Activated B cell treated with CpG ODN at 0.5 μM for 24 hours (primary cell): ENCODE measurements at regions of chr22 and their contacts with region 1.

Region 1: GRCh38 chr22:30386960-30387827 is at the start of gene RNF215:
- DNase-seq: peak; percentile 94
- ATAC-seq: peak; percentile 85
- H3K4me3 Mint-ChIP-seq: peak within 1 kb of the TSS; percentile 84
- H3K27ac Mint-ChIP-seq: peak within 1 kb of the TSS; percentile 41
- H3K4me1 Mint-ChIP-seq: peaks cover 25% of the 10 kb centered on the region
- H3K27me3 Mint-ChIP-seq: peaks cover 3% of the 10 kb centered on the region
- CTCF ChIP-seq: no peak
- total RNA-seq, gene RNF215: 8.6 and 8.8 TPM in 2 replicates

Region 2: DNA sequence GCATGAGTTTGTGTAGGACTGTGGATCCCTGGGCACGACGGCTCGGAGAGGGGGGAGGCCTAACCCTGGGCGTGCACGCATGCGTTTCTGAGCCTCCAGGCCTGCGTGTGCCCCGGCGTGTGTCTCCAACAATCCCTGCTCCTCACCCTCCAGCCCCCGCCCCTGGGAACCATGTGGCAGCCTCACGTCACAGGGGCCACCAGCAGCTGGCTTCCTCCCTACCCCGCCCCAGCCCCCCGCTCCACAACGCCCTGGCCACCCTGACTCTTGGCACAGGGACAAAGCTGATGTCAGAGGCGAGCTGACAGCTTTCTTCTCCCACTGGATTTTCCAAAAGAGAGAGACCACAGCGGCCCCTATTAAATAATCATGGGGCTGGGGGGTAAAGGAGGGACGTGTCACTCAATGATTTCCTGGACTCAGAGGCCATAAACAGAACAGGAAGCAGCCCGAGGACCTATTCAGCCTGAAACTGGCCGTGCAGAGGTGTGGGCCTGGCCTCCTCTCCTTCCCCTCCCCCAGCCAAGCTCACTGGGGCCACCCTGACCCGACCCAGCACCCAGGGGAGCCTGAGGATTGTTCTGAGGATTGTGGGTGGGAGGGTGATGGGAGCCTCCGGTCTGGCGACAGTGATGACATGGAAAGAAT is 133.9 kb before region 1 on chr22:
- CTCF ChIA-PET with region 1: interaction called, 3 read pairs
- POLR2A ChIA-PET with region 1: no interaction called
- intact Hi-C with region 1: loop called (anchors 1 kb)
- DNase-seq: no peak
- ATAC-seq: no peak
- H3K4me3 Mint-ChIP-seq: no peak overlapping the region
- H3K27ac Mint-ChIP-seq: no peak overlapping the region
- H3K4me1 Mint-ChIP-seq: peaks cover 5% of the 10 kb centered on the region
- H3K27me3 Mint-ChIP-seq: peaks cover 17% of the 10 kb centered on the region
- CTCF ChIP-seq: no peak

Region 3: GRCh38 chr22:30326706-30327362 is 60.4 kb before region 1 on chr22 and contains the start of gene TBC1D10A:
- CTCF ChIA-PET with region 1: interaction called, 5 read pairs
- POLR2A ChIA-PET with region 1: interaction called, 6 read pairs
- intact Hi-C with region 1: loop called (anchors 1 kb)
- DNase-seq: peak; percentile 83
- ATAC-seq: peak; percentile 94
- H3K4me3 Mint-ChIP-seq: peak within 1 kb of the TSS; percentile 86
- H3K27ac Mint-ChIP-seq: peak within 1 kb of the TSS; percentile 82
- H3K4me1 Mint-ChIP-seq: peaks cover 45% of the 10 kb centered on the region
- H3K27me3 Mint-ChIP-seq: no peaks in the 10 kb centered on the region
- CTCF ChIP-seq: no peak
- total RNA-seq, gene TBC1D10A: 20.1 and 20.4 TPM in 2 replicates

Region 4: GRCh38 chr22:30336752-30337460 is 50.3 kb before region 1 on chr22:
- CTCF ChIA-PET with region 1: no interaction called
- POLR2A ChIA-PET with region 1: no interaction called
- intact Hi-C with region 1: no loop called
- DNase-seq: no peak
- ATAC-seq: no peak
- H3K4me3 Mint-ChIP-seq: no peak overlapping the region
- H3K27ac Mint-ChIP-seq: no peak overlapping the region
- H3K4me1 Mint-ChIP-seq: no peaks in the 10 kb centered on the region
- H3K27me3 Mint-ChIP-seq: no peaks in the 10 kb centered on the region
- CTCF ChIP-seq: no peak

Region 5: GRCh38 chr22:30485362-30485988 is 98.3 kb after region 1 on chr22:
- CTCF ChIA-PET with region 1: interaction called, 26 read pairs
- POLR2A ChIA-PET with region 1: interaction called, 7 read pairs
- intact Hi-C with region 1: loop called (anchors 1 kb)
- DNase-seq: peak; percentile 66
- ATAC-seq: peak; percentile 93
- H3K4me3 Mint-ChIP-seq: no peak overlapping the region
- H3K27ac Mint-ChIP-seq: no peak overlapping the region
- H3K4me1 Mint-ChIP-seq: no peaks in the 10 kb centered on the region
- H3K27me3 Mint-ChIP-seq: peaks cover 9% of the 10 kb centered on the region
- CTCF ChIP-seq: peak; percentile 31

Region 6: DNA sequence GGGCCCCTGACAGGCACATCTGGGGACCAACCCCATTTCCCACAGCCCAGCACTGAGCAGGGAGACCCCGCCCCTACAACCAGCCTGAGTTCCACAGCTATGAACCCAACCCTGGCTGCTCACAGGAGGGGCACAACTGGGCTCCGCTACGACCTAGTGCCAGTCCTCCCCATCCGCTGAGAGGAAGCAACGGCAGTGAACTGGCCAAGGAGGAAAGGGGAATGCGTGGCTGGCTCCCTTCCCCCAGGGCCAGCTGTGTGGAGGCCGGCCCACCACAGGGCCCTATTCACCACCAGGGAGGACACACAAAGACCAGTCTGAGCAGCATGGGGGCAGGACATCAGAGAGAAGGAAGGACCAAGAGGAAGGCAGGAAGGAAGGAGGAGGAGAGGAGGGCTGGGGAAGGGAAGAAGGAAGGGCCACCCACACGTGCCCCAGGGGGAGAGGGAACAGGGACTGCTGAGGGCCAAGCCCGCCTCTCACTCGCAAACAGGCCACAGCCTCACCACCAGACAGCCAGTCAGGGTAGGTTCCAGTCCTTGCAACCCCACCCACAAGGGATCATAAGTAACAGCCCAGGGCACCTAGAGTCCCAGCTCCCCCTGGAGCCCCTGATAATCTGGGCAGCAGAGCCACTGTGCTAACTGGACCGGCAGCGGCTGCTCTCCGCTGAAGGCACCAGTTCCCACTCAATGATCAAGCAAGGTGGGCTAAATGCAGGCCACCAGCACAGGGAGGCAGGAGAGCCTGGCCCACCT is 195.8 kb after region 1 on chr22:
- CTCF ChIA-PET with region 1: no interaction called
- POLR2A ChIA-PET with region 1: no interaction called
- intact Hi-C with region 1: no loop called
- DNase-seq: no peak
- ATAC-seq: no peak
- H3K4me3 Mint-ChIP-seq: no peak overlapping the region
- H3K27ac Mint-ChIP-seq: no peak overlapping the region
- H3K4me1 Mint-ChIP-seq: no peaks in the 10 kb centered on the region
- H3K27me3 Mint-ChIP-seq: no peaks in the 10 kb centered on the region
- CTCF ChIP-seq: no peak